Activated CD4-positive, alpha-beta memory T cell treated with anti-CD3 and anti-CD28 coated beads for 36 hours (primary cell): ENCODE measurements at regions of chr7 and their contacts with region 1.

Region 1: DNA sequence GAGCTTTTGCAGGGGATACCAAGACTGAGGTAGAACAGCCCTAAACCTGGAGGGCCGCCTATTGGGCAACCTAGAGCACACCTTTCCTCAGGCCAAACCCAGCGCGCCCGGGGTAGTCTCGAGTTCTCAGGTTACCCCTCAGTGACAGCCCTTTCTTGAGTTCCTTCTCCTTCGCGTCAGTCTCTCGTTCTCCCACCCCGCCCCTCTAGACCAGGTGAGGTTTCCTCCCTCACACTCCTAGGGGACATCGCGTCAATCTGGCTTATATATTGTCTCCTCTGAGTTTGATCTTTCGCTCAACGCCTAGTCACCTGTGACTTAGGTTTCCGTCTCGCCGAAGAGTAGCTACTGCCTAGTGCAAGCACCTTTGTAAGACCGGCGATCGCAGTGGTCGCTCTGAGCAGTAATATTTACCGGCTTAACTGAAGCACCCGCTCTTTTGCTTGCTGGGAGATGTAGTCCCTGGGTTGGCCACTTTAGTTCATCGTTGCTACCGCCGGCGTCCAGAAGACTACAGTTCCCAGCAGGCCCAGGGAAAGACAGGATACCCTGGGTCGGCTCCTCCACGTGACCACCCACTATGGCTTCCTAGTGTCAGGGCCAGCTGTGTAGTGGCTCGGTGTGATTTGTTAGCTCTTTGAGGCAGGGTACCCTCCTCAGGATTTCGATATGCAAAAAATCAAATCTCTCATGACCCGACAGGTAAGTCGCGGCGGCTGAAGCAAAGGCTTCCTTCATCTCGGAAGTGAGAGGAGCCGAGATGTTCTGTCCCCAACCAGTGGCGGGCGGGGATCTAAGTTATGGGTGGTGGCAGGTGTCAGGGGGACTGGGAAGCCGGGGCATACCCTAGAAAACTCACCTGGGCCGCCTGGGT is at the start of gene VPS50:
- DNase-seq: peak; percentile 95
- H3K4me3 Mint-ChIP-seq: peak within 1 kb of the TSS; percentile 91
- H3K27ac Mint-ChIP-seq: peak within 1 kb of the TSS; percentile 90
- H3K4me1 Mint-ChIP-seq: peaks cover 11% of the 10 kb centered on the region
- H3K27me3 Mint-ChIP-seq: no peaks in the 10 kb centered on the region
- total RNA-seq, gene VPS50: 15.2 to 18.0 TPM

Region 2: GRCh38 chr7:92590711-92591310 is 641.2 kb before region 1 on chr7:
- CTCF ChIA-PET with region 1: no interaction called
- POLR2A ChIA-PET with region 1: no interaction called
- intact Hi-C with region 1: loop called (anchors 1 kb)
- DNase-seq: no peak
- H3K4me3 Mint-ChIP-seq: peak overlapping the region; percentile 48
- H3K27ac Mint-ChIP-seq: no peak overlapping the region
- H3K4me1 Mint-ChIP-seq: peaks cover 42% of the 10 kb centered on the region
- H3K27me3 Mint-ChIP-seq: no peaks in the 10 kb centered on the region

Region 3: DNA sequence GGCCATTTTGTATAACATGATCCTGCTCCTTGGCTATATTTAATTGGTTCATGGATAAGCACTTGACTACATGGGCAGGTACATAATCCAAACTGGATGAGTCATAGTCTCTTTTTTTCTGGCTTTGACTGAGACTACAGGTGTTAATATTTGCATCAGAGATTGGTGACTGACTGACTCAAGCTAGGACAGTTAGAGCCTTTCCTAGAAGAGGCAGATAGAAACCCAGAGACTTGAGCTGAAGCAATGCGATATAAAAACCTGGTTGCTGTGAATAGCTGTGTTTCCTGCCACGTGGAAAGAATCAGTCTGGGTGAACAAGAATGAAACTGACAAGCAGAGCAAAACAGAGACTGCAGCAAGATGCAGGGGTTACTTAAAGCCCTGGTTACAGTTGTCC is 195.2 kb before region 1 on chr7:
- CTCF ChIA-PET with region 1: no interaction called
- POLR2A ChIA-PET with region 1: no interaction called
- intact Hi-C with region 1: loop called (anchors 1 kb)
- DNase-seq: peak; percentile 64
- H3K4me3 Mint-ChIP-seq: no peak overlapping the region
- H3K27ac Mint-ChIP-seq: peak overlapping the region; percentile 53
- H3K4me1 Mint-ChIP-seq: peaks cover 22% of the 10 kb centered on the region
- H3K27me3 Mint-ChIP-seq: no peaks in the 10 kb centered on the region

Region 4: GRCh38 chr7:93147363-93147762 is 84.7 kb before region 1 on chr7:
- CTCF ChIA-PET with region 1: interaction called, 6 read pairs
- POLR2A ChIA-PET with region 1: interaction called, 3 read pairs
- intact Hi-C with region 1: loop called (anchors 1 kb)
- DNase-seq: peak; percentile 55
- H3K4me3 Mint-ChIP-seq: peak overlapping the region; percentile 84
- H3K27ac Mint-ChIP-seq: peak overlapping the region; percentile 82
- H3K4me1 Mint-ChIP-seq: peaks cover 27% of the 10 kb centered on the region
- H3K27me3 Mint-ChIP-seq: no peaks in the 10 kb centered on the region

Region 5: GRCh38 chr7:93245525-93246432 is 13.7 kb after region 1 on chr7:
- CTCF ChIA-PET with region 1: interaction called, 24 read pairs
- POLR2A ChIA-PET with region 1: interaction called, 5 read pairs
- intact Hi-C with region 1: no loop called
- DNase-seq: no peak
- H3K4me3 Mint-ChIP-seq: no peak overlapping the region
- H3K27ac Mint-ChIP-seq: no peak overlapping the region
- H3K4me1 Mint-ChIP-seq: peaks cover 12% of the 10 kb centered on the region
- H3K27me3 Mint-ChIP-seq: no peaks in the 10 kb centered on the region

Region 6: GRCh38 chr7:94509879-94510581 is 1278.0 kb after region 1 on chr7:
- CTCF ChIA-PET with region 1: no interaction called
- POLR2A ChIA-PET with region 1: no interaction called
- intact Hi-C with region 1: loop called (anchors 2 kb)
- DNase-seq: peak; percentile 71
- H3K4me3 Mint-ChIP-seq: peak overlapping the region; percentile 76
- H3K27ac Mint-ChIP-seq: peak overlapping the region; percentile 91
- H3K4me1 Mint-ChIP-seq: peaks cover 42% of the 10 kb centered on the region
- H3K27me3 Mint-ChIP-seq: no peaks in the 10 kb centered on the region